Right ventricle myocardium superior (tissue), 1 donor: ENCODE measurements at regions of chr7 and their contacts with region 1.

Region 1: DNA sequence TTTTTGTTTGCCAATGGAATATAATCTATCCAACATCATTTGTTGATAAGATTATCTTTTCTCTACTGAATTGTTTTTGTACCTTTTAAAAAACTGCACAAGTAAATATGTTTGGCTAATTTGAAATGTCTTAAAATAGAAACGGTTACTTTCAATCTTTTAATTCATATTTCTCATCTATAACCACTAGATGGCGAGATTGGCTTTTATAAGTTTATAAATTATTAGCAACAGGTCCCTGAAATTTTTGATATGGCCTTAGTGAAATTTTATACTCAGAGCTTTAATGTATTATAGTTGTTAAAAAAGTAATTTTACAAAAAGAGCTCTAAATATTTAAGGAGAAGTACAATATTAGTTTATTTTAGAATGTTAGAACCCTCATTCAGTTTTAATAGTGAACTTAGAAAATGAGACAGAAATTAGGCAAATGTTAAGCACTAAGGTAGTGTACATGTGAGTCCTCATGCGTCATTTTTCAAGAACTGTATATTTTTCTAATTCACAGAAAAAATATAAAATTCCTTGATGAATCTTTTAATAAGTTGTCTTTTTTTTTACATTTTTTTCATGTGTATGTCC is 592.5 kb downstream of the ARL4A start:
- DNase-seq: no peak
- ATAC-seq: no peak

Region 2: DNA sequence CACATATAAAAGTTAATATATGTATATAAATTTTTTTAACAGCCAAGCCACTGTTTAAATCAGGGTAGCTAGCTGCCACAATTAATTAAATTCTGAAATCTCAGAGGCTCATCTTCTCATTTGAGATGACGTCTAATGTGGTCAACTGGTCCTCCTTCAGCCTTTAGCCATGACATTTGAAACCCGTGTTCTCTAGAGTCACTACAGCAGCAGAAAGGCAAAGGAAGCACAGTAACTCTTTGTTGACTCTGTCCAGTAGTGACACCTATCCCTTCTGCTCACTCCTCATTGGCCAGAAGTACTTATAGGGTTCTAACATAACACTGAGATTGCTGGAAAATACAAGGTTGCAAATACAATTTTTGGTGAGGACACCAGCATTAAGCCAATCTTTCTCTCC is 154.0 kb after region 1 on chr7:
- intact Hi-C with region 1: no loop called
- DNase-seq: no peak
- ATAC-seq: no peak

Region 3: DNA sequence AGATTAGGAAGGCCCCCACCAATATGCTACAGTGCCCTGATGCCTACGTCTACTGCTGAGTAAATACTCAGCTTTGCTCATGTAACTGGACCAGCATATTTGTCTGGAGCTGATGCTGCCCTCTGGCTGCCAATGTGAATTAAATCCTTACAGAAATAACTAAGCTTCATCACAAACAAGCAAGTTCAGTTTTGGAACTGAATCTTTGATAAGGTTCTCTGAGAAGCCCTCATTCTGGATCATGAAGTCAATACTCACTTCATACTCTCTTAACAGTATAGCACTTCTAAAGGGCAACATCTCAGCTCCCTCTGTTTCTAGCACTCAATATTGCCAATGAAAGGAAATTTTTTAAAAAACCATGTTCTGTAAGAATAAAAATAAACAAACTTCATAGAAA is 462.9 kb after region 1 on chr7:
- intact Hi-C with region 1: loop called (anchors 10 kb)
- DNase-seq: peak; percentile 33
- ATAC-seq: peak; percentile 88

Region 4: DNA sequence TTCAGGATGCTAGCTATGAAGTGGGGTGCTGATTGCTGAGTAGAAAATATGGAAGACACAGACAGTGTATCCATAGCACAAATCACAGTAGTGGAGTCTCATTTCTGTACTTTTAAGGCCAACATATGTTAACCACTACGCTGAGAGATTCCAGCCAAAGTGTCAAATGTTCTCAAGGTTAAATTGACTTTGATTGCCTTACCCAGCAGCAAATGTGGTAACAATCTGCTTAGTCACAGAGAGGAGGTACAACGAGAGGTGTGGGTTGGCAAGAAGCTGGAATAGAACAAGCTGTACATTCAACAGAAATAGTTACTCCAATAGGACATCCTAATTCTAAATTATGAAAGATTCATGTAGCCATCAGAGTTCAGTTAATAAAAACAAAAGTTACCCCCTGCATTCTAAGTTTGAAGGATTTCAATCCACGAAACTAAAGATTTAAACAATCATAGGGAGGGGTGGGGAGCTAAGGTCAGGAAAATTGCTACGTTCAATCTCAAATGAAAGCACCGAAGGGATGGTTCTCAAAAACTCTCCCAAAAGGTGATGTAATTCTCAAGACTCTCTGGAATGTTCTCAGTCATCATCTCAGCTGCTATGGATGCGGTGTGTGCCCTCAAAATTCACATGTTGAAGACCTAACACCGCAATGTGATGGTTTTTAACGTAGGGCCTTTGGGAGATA is 572.5 kb after region 1 on chr7:
- intact Hi-C with region 1: no loop called
- DNase-seq: no peak
- ATAC-seq: no peak

Region 5: DNA sequence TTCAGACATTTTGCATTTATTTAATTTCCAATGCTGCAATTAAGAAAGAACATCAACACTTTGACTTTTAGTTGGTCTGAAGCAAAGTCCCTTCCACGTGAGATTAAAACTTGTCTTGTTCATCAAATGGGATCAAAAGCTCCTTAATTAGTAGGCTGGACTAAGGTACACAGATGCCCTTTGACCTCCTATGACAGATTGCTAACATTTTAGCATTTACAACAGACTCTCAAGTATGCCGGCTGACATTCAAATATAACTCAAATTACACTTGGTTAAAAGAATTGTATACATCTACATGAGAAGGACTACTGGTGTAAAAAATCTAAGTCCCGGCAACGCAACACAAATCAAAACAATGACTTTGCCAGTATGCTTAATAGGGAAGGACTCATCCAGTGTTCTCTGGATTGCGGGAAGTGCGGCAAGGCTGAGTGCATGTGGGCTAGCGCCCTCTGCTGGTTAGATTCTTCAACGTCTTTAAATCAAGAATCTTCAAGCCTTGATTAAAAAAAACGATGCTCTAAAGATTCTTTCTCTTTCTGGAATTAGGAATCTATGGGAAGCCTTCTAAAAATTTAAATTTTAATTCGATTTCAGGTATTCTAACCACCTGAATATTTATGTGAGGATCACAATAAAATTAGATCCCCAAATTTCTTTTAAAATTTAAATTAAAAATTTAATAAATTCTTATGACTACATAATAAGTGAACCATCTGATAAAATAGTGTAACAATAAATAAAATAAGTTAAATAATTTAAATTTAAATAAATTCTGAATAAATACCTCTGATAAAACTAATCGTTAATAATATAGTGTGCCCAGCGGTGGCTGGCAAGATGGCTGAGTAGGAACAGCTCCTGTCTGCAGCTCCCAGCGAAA is 1177.9 kb after region 1 on chr7:
- intact Hi-C with region 1: loop called (anchors 10 kb)
- DNase-seq: peak; percentile 57
- ATAC-seq: peak; percentile 93

Region 6: GRCh38 chr7:14691597-14692203 is 1411.8 kb after region 1 on chr7:
- intact Hi-C with region 1: loop called (anchors 5 kb)
- DNase-seq: peak; percentile 57
- ATAC-seq: no peak